SK-N-SH (cell line): ENCODE measurements at regions of chr1 and their contacts with region 1.

Region 1: GRCh38 chr1:247390116-247390791 is 25.7 kb upstream of the NLRP3 start:
- DNase-seq: peak; percentile 81
- H3K4me3 ChIP-seq: no peak overlapping the region; a peak in 1 of 4 replicates
- H3K27ac ChIP-seq: no peak overlapping the region
- H3K4me1 ChIP-seq: peaks cover 2 to 16% of the 10 kb centered on the region in 2 experiments; a peak in 2 of 4 replicates
- H3K27me3 ChIP-seq: no peaks in the 10 kb centered on the region
- CTCF ChIP-seq: peak; percentile 93
- EP300 ChIP-seq: no peak
- RAD21 ChIP-seq: peak; percentile 74

Region 2: DNA sequence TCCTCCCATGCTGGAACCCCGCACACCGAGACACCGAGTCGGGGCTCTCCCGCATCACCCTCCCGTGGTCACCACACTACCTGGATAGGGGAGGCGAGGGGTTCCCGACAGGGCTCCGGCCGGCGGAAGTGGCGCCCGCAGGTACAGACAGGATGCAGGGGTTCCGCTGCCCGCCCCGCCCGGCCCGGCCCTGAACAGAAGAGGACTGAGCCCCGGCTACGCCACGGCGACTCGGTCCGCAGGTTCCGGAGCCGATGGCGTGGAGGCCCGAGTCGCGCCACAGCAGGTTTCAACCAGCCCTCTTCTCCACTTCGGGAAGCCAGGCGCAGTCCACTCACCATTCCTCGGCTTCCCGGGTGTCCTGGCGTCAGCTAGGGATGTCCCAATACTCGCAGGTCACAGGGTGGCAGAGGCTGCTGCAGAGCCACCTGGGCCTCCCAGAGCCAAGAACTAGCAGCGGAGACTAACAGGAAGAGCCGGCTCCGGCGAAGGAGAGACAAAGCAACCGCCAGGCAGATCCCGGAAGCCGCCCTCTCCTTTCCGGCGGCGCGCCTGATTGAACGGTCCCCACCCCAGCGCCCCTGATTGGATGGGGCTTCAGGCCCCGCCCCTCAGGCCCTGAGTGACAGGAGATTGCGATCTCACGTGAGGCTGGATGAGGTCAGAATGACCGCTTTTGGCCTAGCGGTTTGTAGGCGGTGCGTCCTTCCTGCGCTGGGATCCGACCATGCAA is 286.2 kb before region 1 on chr1 and contains the start of gene ZNF669:
- CTCF ChIA-PET with region 1: no interaction called
- POLR2A ChIA-PET with region 1: no interaction called
- DNase-seq: peak; percentile 96
- H3K4me3 ChIP-seq: peak within 1 kb of the TSS; percentile 91 to 100
- H3K27ac ChIP-seq: peak within 1 kb of the TSS; percentile 83 to 97
- H3K4me1 ChIP-seq: peaks cover 5 to 8% of the 10 kb centered on the region in 2 experiments; a peak in 3 of 4 replicates
- H3K27me3 ChIP-seq: no peaks in the 10 kb centered on the region
- CTCF ChIP-seq: no peak
- EP300 ChIP-seq: no peak
- RAD21 ChIP-seq: no peak
- polyA plus RNA-seq, gene ZNF669: 3.3 and 3.7 TPM in 2 replicates

Region 3: DNA sequence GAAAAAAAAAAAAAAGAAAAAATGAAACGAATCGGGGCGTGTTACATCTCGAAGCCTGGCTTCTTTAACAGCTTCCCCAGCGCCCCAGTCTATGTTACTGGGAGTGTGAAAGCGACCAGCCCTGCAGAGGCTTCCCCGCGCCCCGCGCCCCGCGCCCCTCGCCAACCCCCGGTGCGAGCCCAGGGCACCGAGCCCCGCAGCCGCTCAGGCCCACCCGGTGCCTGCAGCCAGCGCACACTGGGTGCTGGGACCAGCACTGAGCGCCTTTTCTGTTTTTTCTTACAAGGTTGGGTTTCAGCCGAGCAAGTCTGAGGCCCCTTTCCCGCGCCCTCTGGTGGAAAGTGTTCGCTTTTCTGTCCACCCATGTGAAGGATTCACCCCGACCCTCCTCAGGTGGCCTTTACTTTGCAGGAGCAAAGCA is 16.5 kb before region 1 on chr1:
- CTCF ChIA-PET with region 1: interaction called, 32 read pairs
- POLR2A ChIA-PET with region 1: interaction called, 3 read pairs
- DNase-seq: peak; percentile 38
- H3K4me3 ChIP-seq: no peak overlapping the region
- H3K27ac ChIP-seq: no peak overlapping the region
- H3K4me1 ChIP-seq: peaks cover 0 to 4% of the 10 kb centered on the region in 2 experiments; a peak in 1 of 4 replicates
- H3K27me3 ChIP-seq: no peaks in the 10 kb centered on the region
- CTCF ChIP-seq: peak; percentile 26
- EP300 ChIP-seq: no peak
- RAD21 ChIP-seq: no peak

Region 4: DNA sequence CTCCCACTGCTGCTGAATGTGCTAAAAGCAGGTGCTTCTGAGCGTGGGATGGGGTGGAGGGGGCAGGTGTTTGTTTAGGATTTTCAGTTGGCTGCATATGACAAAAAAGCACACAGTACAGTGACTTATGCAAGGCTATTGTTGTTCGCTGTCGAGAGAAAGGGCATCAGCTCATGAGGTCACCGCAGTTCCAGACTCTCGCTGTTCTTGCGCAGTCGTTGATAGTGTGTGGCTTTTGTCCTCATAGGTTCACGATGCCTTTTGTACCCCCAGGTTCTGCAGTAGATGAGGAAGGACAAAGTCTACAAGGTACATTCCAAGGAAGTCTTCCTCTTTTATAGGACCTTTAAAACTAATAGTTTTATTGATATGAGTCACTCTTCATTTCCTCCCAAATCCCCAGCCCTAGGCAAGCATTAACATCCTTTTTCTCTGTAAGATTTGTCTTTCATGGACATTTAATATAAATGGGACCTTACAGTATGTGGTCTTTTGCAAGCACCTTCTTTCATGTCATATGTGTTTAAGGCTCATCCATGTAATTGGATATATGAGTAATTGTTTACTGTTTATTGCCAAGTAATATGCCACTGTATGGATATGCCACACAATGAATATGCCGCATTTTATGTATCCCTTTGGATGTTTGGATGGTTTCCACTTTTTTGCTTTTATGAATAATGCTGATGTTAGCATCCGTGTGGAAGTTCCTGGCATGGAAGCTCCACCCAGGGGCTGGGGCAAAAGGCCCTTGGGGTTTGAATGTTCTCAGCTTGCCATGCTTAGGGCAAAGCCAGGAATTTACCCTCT is 11.3 kb after region 1 on chr1:
- CTCF ChIA-PET with region 1: interaction called, 13 read pairs
- POLR2A ChIA-PET with region 1: no interaction called
- DNase-seq: no peak
- H3K4me3 ChIP-seq: no peak overlapping the region
- H3K27ac ChIP-seq: no peak overlapping the region
- H3K4me1 ChIP-seq: no peaks in the 10 kb centered on the region
- H3K27me3 ChIP-seq: no peaks in the 10 kb centered on the region
- CTCF ChIP-seq: no peak
- EP300 ChIP-seq: no peak
- RAD21 ChIP-seq: no peak

Region 5: GRCh38 chr1:247465796-247466195 is 75.5 kb after region 1 on chr1:
- CTCF ChIA-PET with region 1: no interaction called
- POLR2A ChIA-PET with region 1: no interaction called
- DNase-seq: no peak
- H3K4me3 ChIP-seq: no peak overlapping the region
- H3K27ac ChIP-seq: no peak overlapping the region
- H3K4me1 ChIP-seq: no peaks in the 10 kb centered on the region
- H3K27me3 ChIP-seq: peaks cover 30% of the 10 kb centered on the region; the same call in 1 of the 2 replicates
- CTCF ChIP-seq: no peak
- EP300 ChIP-seq: no peak
- RAD21 ChIP-seq: no peak

Region 6: DNA sequence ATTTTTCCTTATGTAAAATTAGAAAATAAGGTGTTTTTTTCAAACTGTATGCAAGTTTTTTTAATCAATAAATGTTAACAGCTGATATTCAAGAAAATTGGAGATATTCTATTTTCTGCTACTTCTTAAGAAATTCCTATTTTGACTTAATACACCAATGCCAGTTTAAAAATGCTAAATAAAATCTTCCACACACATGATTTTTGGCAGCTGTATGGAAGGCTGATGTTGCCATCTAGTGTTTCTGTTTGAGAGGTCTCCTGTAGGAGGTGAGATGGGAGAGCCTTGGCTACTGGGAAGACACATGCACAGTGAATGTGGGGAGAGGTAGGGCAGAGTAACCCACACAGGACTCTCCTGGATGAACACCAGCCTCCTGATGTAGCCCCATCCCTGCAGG is 96.8 kb after region 1 on chr1:
- CTCF ChIA-PET with region 1: interaction called, 32 read pairs
- POLR2A ChIA-PET with region 1: no interaction called
- DNase-seq: peak; percentile 35
- H3K4me3 ChIP-seq: no peak overlapping the region
- H3K27ac ChIP-seq: no peak overlapping the region
- H3K4me1 ChIP-seq: no peaks in the 10 kb centered on the region; a peak in 1 of 4 replicates
- H3K27me3 ChIP-seq: peaks cover 17% of the 10 kb centered on the region; the same call in 1 of the 2 replicates
- CTCF ChIP-seq: peak; percentile 76
- EP300 ChIP-seq: no peak
- RAD21 ChIP-seq: peak; percentile 78